ENCODE measurements at regions of chr1 and their contacts with region 1.

Region 1: GRCh38 chr1:172398970-172399755 is 21.3 kb upstream of the C1orf105 start:
- DNase-seq: peak; percentile 67
- H3K4me3 Mint-ChIP-seq: peak overlapping the region; percentile 26
- H3K27ac Mint-ChIP-seq: peak overlapping the region; percentile 21
- H3K4me1 Mint-ChIP-seq: peaks cover 33% of the 10 kb centered on the region
- H3K27me3 Mint-ChIP-seq: no peaks in the 10 kb centered on the region
- CTCF ChIP-seq: peak; percentile 77

Region 2: DNA sequence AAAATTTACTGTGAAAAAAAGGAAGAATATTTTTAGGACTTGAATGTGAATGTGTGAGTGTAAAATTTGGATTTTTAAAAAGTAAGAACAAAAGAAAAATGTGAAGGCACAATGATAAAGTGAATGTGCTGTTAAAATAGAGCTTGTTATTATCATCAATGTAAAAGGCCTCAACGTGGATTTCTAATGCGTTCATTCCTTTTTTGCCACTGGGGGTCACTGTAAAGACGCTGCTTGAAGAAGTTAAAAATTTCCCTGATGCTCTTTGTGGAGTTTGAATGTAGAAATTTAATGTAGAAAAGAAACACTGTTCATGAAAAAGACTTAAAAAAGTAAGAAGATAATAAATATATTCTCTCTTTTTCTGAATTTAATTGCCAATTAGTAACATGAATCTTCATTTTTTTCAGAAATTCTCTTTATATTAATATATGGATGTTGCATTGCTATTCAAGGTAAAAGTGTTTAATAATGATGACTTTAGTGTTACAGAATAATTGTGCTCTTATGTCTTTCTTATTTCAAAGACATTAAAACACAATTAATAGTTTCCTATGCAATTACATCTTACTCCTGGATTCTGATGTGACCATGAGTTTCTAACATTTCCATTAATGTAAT is 396.3 kb before region 1 on chr1:
- CTCF ChIA-PET with region 1: interaction called, 77 read pairs
- POLR2A ChIA-PET with region 1: interaction called, 14 read pairs
- intact Hi-C with region 1: loop called (anchors 1 kb)
- DNase-seq: peak; percentile 70
- H3K4me3 Mint-ChIP-seq: no peak overlapping the region
- H3K27ac Mint-ChIP-seq: no peak overlapping the region
- H3K4me1 Mint-ChIP-seq: peaks cover 18% of the 10 kb centered on the region
- H3K27me3 Mint-ChIP-seq: no peaks in the 10 kb centered on the region
- CTCF ChIP-seq: peak; percentile 95

Region 3: DNA sequence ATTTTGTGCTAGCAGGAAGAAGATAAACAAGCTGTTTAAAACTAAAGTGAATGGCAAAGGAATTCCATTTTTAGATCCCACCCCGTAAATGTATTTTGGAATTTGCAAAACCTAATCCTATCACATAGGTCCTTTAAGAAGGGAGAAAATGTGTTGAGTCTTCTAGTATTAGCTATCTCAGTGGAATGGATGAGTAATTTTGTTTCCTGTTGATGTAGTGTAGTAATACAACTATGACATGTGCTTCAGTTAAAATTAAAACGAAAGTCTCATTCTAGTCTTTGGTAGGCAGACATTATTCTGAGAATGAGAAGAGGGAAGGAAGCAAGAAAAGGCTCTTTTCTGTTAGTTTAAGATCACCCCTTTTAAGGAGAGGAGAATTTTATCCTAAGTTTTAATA is 244.6 kb before region 1 on chr1:
- CTCF ChIA-PET with region 1: interaction called, 5 read pairs
- POLR2A ChIA-PET with region 1: interaction called, 6 read pairs
- intact Hi-C with region 1: loop called (anchors 1 kb)
- DNase-seq: peak; percentile 63
- H3K4me3 Mint-ChIP-seq: peak overlapping the region; percentile 39
- H3K27ac Mint-ChIP-seq: peak overlapping the region; percentile 97
- H3K4me1 Mint-ChIP-seq: peaks cover 19% of the 10 kb centered on the region
- H3K27me3 Mint-ChIP-seq: no peaks in the 10 kb centered on the region
- CTCF ChIP-seq: no peak

Region 4: GRCh38 chr1:172286629-172287076 is 112.5 kb before region 1 on chr1:
- CTCF ChIA-PET with region 1: interaction called, 28 read pairs
- POLR2A ChIA-PET with region 1: interaction called, 14 read pairs
- intact Hi-C with region 1: loop called (anchors 1 kb)
- DNase-seq: peak; percentile 94
- H3K4me3 Mint-ChIP-seq: no peak overlapping the region
- H3K27ac Mint-ChIP-seq: peak overlapping the region; percentile 61
- H3K4me1 Mint-ChIP-seq: peaks cover 26% of the 10 kb centered on the region
- H3K27me3 Mint-ChIP-seq: no peaks in the 10 kb centered on the region
- CTCF ChIP-seq: no peak

Region 5: DNA sequence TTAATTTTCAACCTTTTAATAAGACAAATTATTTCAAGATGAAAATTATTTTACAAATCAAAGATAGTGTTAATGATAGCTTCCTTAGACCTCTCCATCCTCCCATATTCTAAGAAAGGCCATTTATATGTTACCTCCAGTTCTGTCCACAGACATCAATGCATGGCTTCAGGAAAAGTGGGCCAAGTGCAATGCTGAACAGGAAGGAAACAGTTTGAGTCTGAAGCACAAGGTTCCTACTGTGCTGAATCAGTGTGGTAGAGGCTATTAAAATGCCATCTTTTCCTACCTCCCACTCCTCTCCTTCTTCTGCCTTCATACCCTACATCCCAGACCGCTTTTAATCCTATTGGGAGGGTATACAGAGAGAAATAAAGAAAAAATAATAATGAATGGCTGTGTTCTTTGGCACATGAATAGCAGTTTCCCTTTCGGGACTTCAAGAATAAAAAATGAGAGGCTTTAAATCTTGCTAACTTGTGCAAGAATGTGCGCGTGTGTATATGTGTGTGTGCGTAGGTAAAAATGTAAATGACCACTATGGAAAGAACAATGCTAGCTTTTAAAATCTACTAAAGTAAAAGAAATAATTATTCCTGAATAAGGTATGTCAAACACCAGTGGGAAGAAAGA is 41.3 kb before region 1 on chr1:
- CTCF ChIA-PET with region 1: interaction called, 20 read pairs
- POLR2A ChIA-PET with region 1: interaction called, 7 read pairs
- intact Hi-C with region 1: loop called (anchors 1 kb)
- DNase-seq: peak; percentile 18
- H3K4me3 Mint-ChIP-seq: peak overlapping the region; percentile 53
- H3K27ac Mint-ChIP-seq: peak overlapping the region; percentile 87
- H3K4me1 Mint-ChIP-seq: peaks cover 62% of the 10 kb centered on the region
- H3K27me3 Mint-ChIP-seq: no peaks in the 10 kb centered on the region
- CTCF ChIP-seq: no peak

Region 6: GRCh38 chr1:172443626-172444453 is 44.7 kb after region 1 on chr1 and contains the start of gene PIGC:
- CTCF ChIA-PET with region 1: interaction called, 11 read pairs
- POLR2A ChIA-PET with region 1: interaction called, 4 read pairs
- intact Hi-C with region 1: no loop called
- DNase-seq: peak; percentile 93
- H3K4me3 Mint-ChIP-seq: peak within 1 kb of the TSS; percentile 85
- H3K27ac Mint-ChIP-seq: peak within 1 kb of the TSS; percentile 92
- H3K4me1 Mint-ChIP-seq: peaks cover 33% of the 10 kb centered on the region
- H3K27me3 Mint-ChIP-seq: no peaks in the 10 kb centered on the region
- CTCF ChIP-seq: peak; percentile 87
- total RNA-seq, gene PIGC: 20.2 and 23.1 TPM in 2 replicates